ENCODE measurements at regions of chr6 and their contacts with region 1.

Region 1: DNA sequence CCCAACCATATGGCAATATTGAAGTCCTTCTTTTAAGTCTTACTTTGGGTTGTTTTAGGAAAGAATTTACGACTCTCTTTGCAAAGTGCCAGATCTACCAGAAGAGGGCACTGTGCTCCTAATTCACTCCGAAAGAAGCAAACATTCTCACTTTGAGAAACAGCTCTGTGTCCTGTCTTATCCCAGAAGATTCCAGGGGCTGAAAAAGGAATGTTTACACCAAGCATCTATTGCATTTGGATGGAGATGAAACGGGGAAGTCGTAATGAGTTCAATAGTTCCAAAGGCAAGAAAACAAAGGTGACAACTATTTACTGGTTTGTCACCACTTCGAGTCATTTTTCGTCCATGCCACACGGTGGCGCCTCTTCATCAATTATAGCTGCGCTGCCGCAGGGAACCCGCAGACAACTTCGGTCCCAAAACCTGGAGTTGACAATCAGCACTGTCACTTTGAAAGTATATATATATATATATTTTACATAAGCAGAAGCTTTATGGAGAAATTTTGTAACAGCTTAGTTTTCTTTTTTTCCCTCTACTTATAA is 121.6 kb downstream of the MOXD1 start:
- DNase-seq: peak; percentile 73
- ATAC-seq: peak; percentile 95
- H3K4me3 ChIP-seq: peak overlapping the region; percentile 90; the same call in 1 of the 2 replicates
- H3K27ac ChIP-seq: no peak overlapping the region; the same call in 1 of the 2 replicates
- H3K4me1 ChIP-seq: no peaks in the 10 kb centered on the region
- H3K27me3 ChIP-seq: no peaks in the 10 kb centered on the region; the same call in 1 of the 2 replicates
- CTCF ChIP-seq: peak; percentile 67
- POLR2A ChIP-seq: no peak
- RAD21 ChIP-seq: peak; percentile 67

Region 2: DNA sequence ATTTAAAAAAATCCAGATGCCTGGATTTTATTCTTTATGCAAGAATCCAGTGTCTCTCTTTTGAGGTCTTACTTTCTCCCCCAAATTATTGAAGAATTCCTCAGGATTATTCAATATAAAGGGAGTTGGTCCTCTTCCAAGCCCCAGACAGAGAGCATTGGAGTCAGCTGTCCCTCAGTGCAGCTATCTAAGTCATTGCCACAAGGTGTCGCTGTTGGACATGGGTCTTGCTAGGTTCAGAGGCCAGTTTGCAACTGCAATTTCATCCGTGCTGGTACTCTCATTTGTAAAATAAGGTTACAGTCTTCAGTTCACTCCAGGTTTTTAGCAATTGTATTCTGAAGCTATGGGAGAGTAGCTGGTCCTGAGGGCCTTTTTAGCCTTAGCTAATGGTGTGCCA is 356.3 kb before region 1 on chr6:
- CTCF ChIA-PET with region 1: interaction called, 8 read pairs
- POLR2A ChIA-PET with region 1: no interaction called
- dilution Hi-C with region 1: no loop called
- in situ Hi-C with region 1: loop called (anchors 10 kb)
- intact Hi-C with region 1: loop called (anchors 1 kb)
- DNase-seq: peak; percentile 57
- ATAC-seq: no peak
- H3K4me3 ChIP-seq: no peak overlapping the region
- H3K27ac ChIP-seq: no peak overlapping the region
- H3K4me1 ChIP-seq: no peaks in the 10 kb centered on the region
- H3K27me3 ChIP-seq: no peaks in the 10 kb centered on the region
- CTCF ChIP-seq: peak; percentile 49
- POLR2A ChIP-seq: no peak
- RAD21 ChIP-seq: peak; percentile 62

Region 3: GRCh38 chr6:132259070-132259469 is 20.6 kb before region 1 on chr6:
- CTCF ChIA-PET with region 1: interaction called, 14 read pairs
- POLR2A ChIA-PET with region 1: no interaction called
- dilution Hi-C with region 1: no loop called
- in situ Hi-C with region 1: no loop called
- intact Hi-C with region 1: no loop called
- DNase-seq: peak; percentile 58
- ATAC-seq: peak; percentile 66
- H3K4me3 ChIP-seq: no peak overlapping the region
- H3K27ac ChIP-seq: no peak overlapping the region
- H3K4me1 ChIP-seq: 0 out of 2 replicates have a peak, but pooled peaks cover 2% of the 10 kb centered on the region
- H3K27me3 ChIP-seq: peaks cover 1% of the 10 kb centered on the region; the same call in 1 of the 2 replicates
- CTCF ChIP-seq: peak; percentile 54
- POLR2A ChIP-seq: no peak
- RAD21 ChIP-seq: peak; percentile 70

Region 4: GRCh38 chr6:132300323-132300949 is 20.8 kb after region 1 on chr6:
- CTCF ChIA-PET with region 1: interaction called, 18 read pairs
- POLR2A ChIA-PET with region 1: no interaction called
- dilution Hi-C with region 1: no loop called
- in situ Hi-C with region 1: no loop called
- intact Hi-C with region 1: no loop called
- DNase-seq: peak; percentile 75
- ATAC-seq: peak; percentile 90
- H3K4me3 ChIP-seq: no peak overlapping the region
- H3K27ac ChIP-seq: no peak overlapping the region
- H3K4me1 ChIP-seq: no peaks in the 10 kb centered on the region; the same call in 1 of the 2 replicates
- H3K27me3 ChIP-seq: no peaks in the 10 kb centered on the region
- CTCF ChIP-seq: peak; percentile 83
- POLR2A ChIP-seq: no peak
- RAD21 ChIP-seq: peak; percentile 90

Region 5: GRCh38 chr6:132495604-132496079 is 216.0 kb after region 1 on chr6:
- CTCF ChIA-PET with region 1: interaction called, 10 read pairs
- POLR2A ChIA-PET with region 1: no interaction called
- dilution Hi-C with region 1: loop called (anchors 25 kb)
- in situ Hi-C with region 1: no loop called
- intact Hi-C with region 1: no loop called
- DNase-seq: no peak
- ATAC-seq: no peak
- H3K4me3 ChIP-seq: no peak overlapping the region
- H3K27ac ChIP-seq: no peak overlapping the region
- H3K4me1 ChIP-seq: peaks cover 2% of the 10 kb centered on the region; the same call in 1 of the 2 replicates
- H3K27me3 ChIP-seq: no peaks in the 10 kb centered on the region
- CTCF ChIP-seq: no peak
- POLR2A ChIP-seq: no peak
- RAD21 ChIP-seq: no peak

Region 6: DNA sequence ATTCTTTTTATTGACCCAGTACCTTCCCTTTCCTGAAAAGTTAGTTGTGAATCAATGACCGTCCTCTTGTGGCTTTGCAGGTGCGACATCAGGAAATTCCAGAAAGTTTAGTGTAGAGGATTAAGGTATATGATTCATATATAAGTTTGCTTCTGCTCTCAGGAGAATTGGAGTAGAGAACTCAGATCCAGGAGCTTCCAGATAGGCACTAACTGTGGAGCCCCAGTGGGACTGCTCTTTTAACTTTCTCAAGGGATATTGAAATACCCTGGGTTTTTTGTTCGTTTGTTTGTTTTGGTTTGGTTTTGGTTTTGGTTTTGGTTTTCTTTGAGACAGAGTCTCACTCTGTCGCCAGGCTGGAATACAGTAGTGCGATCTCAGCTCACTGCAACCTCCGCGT is 334.9 kb after region 1 on chr6:
- CTCF ChIA-PET with region 1: no interaction called
- POLR2A ChIA-PET with region 1: no interaction called
- dilution Hi-C with region 1: no loop called
- in situ Hi-C with region 1: no loop called
- intact Hi-C with region 1: no loop called
- DNase-seq: no peak
- ATAC-seq: no peak
- H3K4me3 ChIP-seq: no peak overlapping the region
- H3K27ac ChIP-seq: no peak overlapping the region
- H3K4me1 ChIP-seq: no peaks in the 10 kb centered on the region
- H3K27me3 ChIP-seq: peaks cover 23% of the 10 kb centered on the region
- CTCF ChIP-seq: no peak
- POLR2A ChIP-seq: no peak
- RAD21 ChIP-seq: no peak

Measured in IMR-90 (cell line).